ENCODE measurements at regions of chr7 and their contacts with region 1.

Region 1: DNA sequence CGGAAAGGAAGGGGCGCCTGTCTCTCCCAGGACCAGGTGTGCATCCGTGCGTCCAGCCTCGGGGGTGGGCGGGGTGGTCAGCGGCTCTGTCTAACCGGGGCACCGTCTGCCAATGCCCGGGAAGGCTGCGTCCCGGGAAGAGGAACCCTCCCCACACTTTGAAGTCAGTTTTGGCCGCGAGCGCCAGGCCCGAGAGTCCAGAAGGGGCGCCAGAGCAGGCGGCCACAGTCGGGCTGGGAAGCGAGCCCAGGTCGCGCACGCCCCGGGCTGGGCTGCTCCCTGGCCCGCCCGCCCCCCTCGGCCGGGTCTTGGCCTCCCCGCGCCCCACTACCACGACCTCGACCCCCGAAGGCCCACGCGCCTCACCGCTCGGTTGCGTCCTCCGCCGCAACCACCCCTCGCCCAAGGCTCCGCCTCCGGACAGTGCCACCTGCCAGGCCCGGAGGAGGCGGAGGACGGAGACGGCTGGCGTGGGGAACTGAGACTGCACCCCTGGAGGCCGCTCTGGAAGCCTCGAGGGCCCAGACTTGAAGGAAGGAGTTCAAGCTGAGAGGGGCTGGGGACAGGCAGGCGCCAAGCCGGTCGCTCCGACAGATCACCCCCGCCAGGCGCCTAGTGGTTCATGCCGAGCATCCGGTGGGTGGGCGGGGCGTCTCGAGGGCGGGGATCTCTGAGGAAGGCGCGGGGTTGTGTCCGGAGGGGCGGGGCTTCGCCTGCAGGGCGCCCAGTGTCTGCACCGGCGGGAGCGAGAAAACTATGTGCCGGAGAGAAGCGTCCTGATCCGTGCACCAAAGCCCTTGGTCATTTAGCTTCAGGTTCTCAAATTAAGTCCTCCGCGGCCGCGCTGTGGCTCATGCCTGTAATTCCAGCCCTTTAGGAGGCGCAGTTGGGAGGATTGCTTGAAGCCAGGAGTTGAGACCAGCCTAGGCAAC is at the start of gene BRAT1:
- DNase-seq: peak; percentile 87
- H3K4me3 Mint-ChIP-seq: peak within 1 kb of the TSS; percentile 91
- H3K27ac Mint-ChIP-seq: peak within 1 kb of the TSS; percentile 86
- H3K4me1 Mint-ChIP-seq: peaks cover 25% of the 10 kb centered on the region
- H3K27me3 Mint-ChIP-seq: no peaks in the 10 kb centered on the region
- total RNA-seq, gene BRAT1: 39.2 and 42.9 TPM in 2 replicates

Region 2: GRCh38 chr7:2314209-2314955 is 241.0 kb before region 1 on chr7 and contains the start of gene SNX8:
- intact Hi-C with region 1: loop called (anchors 5 kb)
- DNase-seq: peak; percentile 93
- H3K4me3 Mint-ChIP-seq: peak within 1 kb of the TSS; percentile 91
- H3K27ac Mint-ChIP-seq: peak within 1 kb of the TSS; percentile 87
- H3K4me1 Mint-ChIP-seq: peaks cover 8% of the 10 kb centered on the region
- H3K27me3 Mint-ChIP-seq: no peaks in the 10 kb centered on the region
- total RNA-seq, gene SNX8: 40.8 and 41.8 TPM in 2 replicates

Region 3: DNA sequence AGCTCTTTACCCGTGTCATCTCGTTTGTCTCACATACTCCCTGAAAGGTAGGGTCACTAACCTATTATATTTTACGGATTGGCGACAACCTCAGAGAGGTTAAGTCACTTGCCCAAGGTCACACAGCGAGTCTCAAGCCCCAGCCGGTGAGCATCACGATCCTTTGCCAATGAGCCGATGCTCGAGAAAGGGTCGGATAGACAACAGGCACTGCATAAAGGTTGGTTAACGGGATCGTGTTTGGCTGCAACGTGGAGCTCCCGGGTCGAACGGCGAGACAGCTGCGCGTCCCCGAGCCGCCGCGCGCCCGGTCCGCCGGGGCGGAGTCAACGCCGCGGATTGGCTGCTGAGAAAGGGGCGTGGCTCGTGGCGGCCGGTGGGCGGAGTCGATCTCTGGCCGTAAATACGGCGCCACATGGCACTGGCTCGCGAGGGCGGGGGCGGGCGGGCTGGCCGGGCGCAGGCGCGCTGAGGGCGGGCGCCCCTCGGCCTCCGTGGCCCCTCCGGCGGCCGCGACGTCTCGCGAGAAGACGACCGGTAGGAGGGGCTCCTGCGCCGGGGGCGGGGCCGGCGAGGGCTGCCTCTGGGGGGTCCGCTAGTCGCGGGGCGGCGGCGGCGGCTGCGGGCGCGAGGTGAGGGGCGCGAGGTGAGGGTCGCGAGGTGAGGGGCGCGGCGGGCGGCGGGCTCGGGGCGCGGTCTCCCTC is 152.2 kb before region 1 on chr7 and contains the start of gene CHST12:
- intact Hi-C with region 1: loop called (anchors 1 kb)
- DNase-seq: peak; percentile 94
- H3K4me3 Mint-ChIP-seq: peak within 1 kb of the TSS; percentile 90
- H3K27ac Mint-ChIP-seq: peak within 1 kb of the TSS; percentile 78
- H3K4me1 Mint-ChIP-seq: peaks cover 51% of the 10 kb centered on the region
- H3K27me3 Mint-ChIP-seq: no peaks in the 10 kb centered on the region
- total RNA-seq, gene CHST12: 9.9 and 10.6 TPM in 2 replicates

Region 4: DNA sequence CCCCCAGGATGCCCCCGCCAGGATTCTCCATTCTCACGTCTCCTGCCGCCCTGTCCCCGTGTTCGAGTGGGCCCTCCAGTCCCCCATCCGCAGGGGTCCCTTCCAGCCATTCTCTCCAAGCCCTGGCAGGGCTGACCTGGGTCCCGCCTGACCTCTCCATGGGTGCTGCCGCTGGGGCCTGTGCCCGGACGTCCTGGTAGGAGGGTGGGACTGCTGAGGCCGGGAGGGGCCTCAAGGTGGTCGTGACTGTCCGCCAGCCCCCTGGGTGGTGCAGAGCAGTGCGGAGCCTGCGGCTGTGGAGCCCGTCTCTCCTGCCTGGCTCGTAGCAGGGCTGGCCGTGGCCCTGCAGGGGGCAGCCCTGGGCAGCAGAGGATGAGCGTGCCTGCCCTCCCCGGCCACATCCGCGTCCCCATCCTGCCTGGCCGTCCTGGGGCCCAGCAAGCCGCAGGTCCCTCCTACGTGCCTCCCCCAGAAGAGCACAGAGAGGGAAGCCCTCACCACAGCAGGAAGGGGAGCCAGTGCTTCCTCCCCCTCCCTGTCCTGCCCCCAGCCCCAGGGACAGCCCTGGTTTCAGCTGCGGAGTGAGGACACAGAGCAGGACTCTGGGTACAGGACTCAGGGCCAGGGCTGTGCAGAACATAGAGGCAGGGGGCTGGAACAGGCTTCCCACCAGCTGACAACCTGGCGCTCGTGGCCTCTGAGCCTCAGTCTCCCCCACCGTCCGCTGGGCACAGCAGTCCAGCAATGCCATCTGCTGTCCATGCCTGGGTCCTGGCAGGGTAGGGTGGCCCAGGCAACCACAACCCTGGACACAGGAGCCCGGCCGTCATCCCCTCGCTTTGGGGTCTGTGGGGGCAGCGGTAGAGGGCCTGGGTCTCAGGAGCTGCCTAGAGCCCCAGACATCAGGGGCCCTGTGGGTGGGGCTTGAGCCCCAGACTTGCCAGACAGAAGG is 77.7 kb before region 1 on chr7:
- intact Hi-C with region 1: loop called (anchors 2 kb)
- DNase-seq: peak; percentile 52
- H3K4me3 Mint-ChIP-seq: no peak overlapping the region
- H3K27ac Mint-ChIP-seq: no peak overlapping the region
- H3K4me1 Mint-ChIP-seq: no peaks in the 10 kb centered on the region
- H3K27me3 Mint-ChIP-seq: peaks cover 5% of the 10 kb centered on the region

Region 5: DNA sequence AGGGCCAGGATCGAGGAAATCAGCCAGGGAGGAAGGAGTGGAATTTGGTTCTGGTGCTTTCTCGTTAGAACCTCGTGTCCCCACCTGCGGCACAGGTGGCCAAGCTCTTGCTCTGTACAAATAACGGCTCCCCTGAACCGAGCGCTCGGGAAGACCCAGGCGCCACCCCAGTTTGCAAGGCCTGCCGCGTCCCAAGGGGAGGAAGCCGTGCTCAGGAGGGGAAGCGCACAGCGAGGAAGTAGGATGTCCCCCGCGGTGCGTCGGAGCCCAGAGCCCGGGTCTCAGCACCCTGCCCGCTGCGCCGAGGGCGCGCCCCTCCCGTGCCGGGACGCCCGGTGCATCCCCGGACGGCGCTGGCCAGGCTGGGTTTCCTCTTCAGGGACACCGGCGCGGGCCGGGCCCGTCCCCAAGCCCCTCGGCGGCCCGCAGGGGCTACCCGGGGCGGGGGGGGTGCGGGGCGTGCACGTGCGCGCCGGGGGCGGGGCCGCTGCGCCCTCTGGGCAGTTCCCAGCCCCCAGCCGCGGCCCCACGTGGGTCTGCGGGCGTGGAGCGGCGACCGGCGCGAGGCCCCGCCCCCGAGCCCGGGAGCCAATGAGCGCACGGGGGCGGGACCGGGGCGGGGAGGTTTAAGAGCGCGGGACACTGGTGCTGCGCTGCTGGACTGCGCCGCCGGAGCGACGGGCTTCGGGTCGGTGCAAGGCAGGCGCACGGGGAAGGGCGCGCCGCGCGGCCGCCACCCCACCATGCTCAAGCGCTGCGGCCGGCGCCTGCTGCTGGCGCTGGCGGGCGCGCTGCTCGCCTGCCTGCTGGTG is 36.1 kb before region 1 on chr7 and contains the start of gene LFNG:
- intact Hi-C with region 1: loop called (anchors 1 kb)
- DNase-seq: peak; percentile 84
- H3K4me3 Mint-ChIP-seq: peak within 1 kb of the TSS; percentile 97
- H3K27ac Mint-ChIP-seq: peak within 1 kb of the TSS; percentile 91
- H3K4me1 Mint-ChIP-seq: peaks cover 35% of the 10 kb centered on the region
- H3K27me3 Mint-ChIP-seq: no peaks in the 10 kb centered on the region
- total RNA-seq, gene LFNG: 34.8 and 34.9 TPM in 2 replicates

Region 6: GRCh38 chr7:2632733-2633537 is 77.5 kb after region 1 on chr7:
- intact Hi-C with region 1: loop called (anchors 1 kb)
- DNase-seq: peak; percentile 24
- H3K4me3 Mint-ChIP-seq: peak overlapping the region; percentile 91
- H3K27ac Mint-ChIP-seq: peak overlapping the region; percentile 81
- H3K4me1 Mint-ChIP-seq: peaks cover 15% of the 10 kb centered on the region
- H3K27me3 Mint-ChIP-seq: no peaks in the 10 kb centered on the region

Region 7: GRCh38 chr7:2844165-2844898 is 288.9 kb after region 1 on chr7 and contains the start of gene GNA12:
- intact Hi-C with region 1: loop called (anchors 10 kb)
- DNase-seq: peak; percentile 99
- H3K4me3 Mint-ChIP-seq: peak within 1 kb of the TSS; percentile 90
- H3K27ac Mint-ChIP-seq: peak within 1 kb of the TSS; percentile 72
- H3K4me1 Mint-ChIP-seq: peaks cover 31% of the 10 kb centered on the region
- H3K27me3 Mint-ChIP-seq: no peaks in the 10 kb centered on the region
- total RNA-seq, gene GNA12: 36.3 and 36.4 TPM in 2 replicates

Measured in activated T-helper 1 cell treated with anti-CD3 and anti-CD28 coated beads, Interleukin-12 subunit alpha, Interleukin-12 subunit beta, Interleukin-2, Interleukin-4 antibody, amounts not matched to agents 30 ng/mL and 10 ng/mL and 1 ng/mL, durations not matched to agents 14 hours and 24 hours and 36 hours (primary cell).